ENCODE measurements at regions of chr5 and their contacts with region 1.

Region 1: DNA sequence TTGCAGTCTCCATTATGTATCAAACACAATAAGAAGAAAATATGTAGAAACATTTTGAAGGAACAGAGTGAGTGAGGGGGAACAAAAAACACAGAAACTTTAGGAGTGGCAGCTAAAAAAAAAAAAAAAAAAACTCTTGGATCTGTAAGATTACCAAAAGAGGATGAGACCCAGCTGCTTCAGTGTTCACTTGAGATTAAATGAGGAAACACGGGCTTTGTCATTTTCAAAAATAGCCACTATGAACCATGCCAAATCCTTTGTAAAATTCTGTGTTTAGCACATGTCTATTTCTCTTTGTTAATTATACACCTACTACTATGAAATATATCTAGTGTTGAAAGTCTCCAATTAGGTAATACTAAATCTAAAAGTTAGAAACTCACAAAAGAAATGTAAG is 485.9 kb downstream of the EFNA5 start:
- DNase-seq: no peak
- H3K4me3 ChIP-seq: no peak overlapping the region
- H3K27ac ChIP-seq: no peak overlapping the region
- H3K4me1 ChIP-seq: no peaks in the 10 kb centered on the region
- H3K27me3 ChIP-seq: no peaks in the 10 kb centered on the region
- CTCF ChIP-seq: no peak

Region 2: GRCh38 chr5:107149243-107150005 is 35.4 kb before region 1 on chr5:
- intact Hi-C with region 1: loop called (anchors 5 kb)
- DNase-seq: no peak
- H3K4me3 ChIP-seq: no peak overlapping the region
- H3K27ac ChIP-seq: no peak overlapping the region
- H3K4me1 ChIP-seq: no peaks in the 10 kb centered on the region
- H3K27me3 ChIP-seq: no peaks in the 10 kb centered on the region
- CTCF ChIP-seq: no peak

Region 3: GRCh38 chr5:107486489-107486888 is 301.6 kb after region 1 on chr5:
- intact Hi-C with region 1: no loop called
- DNase-seq: no peak
- H3K4me3 ChIP-seq: no peak overlapping the region
- H3K27ac ChIP-seq: no peak overlapping the region
- H3K4me1 ChIP-seq: no peaks in the 10 kb centered on the region
- H3K27me3 ChIP-seq: no peaks in the 10 kb centered on the region
- CTCF ChIP-seq: no peak

Region 4: DNA sequence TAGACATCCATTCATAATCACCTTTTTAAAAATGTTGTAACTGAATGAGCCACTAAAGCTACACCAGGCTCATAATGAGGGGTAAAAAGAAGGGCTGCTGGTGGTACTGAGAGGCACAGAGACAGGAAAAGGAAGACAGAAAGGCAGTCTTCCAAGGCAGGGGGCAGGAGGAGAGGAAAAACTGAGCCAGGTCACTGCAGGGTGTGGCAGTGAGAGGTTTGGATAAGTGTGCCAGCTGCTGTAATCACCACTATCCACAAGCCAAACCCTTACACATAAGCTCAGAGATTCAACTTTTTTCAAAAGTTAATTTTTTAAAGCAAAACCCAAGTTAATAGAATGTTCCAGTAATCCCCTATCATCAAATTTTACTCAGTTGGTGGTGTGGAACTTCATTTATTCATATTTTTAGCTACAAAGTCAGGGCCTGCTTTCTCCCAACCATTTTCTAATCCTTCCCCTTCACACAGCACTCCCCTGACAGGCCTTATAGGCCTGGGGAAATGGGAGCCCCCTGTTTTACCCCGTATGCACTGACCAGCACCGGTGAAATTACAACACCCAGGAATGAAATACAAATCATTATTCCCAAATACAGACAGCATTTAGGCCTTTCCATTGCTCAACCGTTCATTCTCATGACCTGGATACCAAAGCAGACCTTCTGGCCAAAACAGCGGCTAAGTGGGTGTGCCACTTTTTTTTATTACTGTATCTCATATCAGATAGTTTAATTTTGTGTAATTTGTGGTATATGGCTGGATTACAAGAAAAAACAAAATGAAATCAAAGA is 409.6 kb after region 1 on chr5:
- intact Hi-C with region 1: no loop called
- DNase-seq: peak; percentile 49
- H3K4me3 ChIP-seq: no peak overlapping the region
- H3K27ac ChIP-seq: no peak overlapping the region
- H3K4me1 ChIP-seq: no peaks in the 10 kb centered on the region
- H3K27me3 ChIP-seq: no peaks in the 10 kb centered on the region
- CTCF ChIP-seq: no peak

Measured in colonic mucosa (tissue), 4 donors.